ENCODE measurements at regions of chr4 and their contacts with region 1.

Region 1: DNA sequence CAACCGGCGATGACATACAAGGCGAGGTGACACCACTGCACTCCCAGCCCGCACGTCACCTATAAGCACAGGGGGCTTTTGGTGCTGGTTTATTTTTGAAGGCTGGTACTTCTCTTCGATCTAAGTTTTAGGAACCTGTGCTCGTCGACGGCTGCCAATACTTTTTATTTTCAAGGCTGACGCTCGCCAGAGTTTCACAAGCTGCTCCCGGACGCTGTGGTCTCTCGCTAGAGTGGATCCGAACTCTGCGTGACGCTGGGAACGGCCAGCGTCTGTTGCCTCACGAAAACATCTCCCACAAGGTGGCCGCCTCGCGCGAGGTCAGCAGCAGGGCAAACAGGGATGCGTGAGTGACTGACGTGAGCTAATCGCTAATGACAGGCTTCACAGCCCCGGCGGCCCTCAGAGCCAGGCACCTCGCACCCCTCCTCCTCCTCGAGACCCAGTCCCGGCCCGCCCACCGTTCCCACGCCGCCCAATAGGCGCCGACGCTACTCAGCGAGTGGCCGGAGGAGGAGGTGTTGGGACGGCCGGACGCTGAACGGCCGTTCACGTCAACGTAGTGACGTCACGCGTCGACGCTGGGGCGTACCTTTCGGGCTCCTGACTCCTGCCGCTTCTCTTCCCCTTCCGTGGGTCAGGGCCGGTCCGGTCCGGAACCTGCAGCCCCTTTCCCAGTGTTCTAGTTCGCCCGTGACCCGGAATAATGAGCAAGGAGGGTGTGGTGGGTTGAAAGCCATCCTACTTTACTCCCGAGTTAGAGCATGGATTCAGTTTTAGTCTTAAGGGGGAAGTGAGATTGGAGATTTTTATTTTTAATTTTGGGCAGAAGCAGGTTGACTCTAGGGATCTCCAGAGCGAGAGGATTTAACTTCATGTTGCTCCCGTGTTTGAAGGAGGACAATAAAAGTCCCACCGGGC is at the start of gene CLCN3:
- DNase-seq: peak; percentile 97 to 99
- ATAC-seq: peak; percentile 98 to 100 (median 99)
- H3K4me3 ChIP-seq: peak within 1 kb of the TSS; percentile 68 to 85 (median 72)
- H3K27ac ChIP-seq: peak within 1 kb of the TSS; percentile 80 to 96 (median 94)
- H3K4me1 ChIP-seq: peaks cover 0 to 45% (median 29%) of the 10 kb centered on the region in 9 donors
- H3K27me3 ChIP-seq: no peaks in the 10 kb centered on the region
- CTCF ChIP-seq: peak in 4 of 9 donors; percentile 21 to 47 (median 34)
- total RNA-seq, gene CLCN3: 53.4 to 94.9 (median 65.2) TPM

Region 2: DNA sequence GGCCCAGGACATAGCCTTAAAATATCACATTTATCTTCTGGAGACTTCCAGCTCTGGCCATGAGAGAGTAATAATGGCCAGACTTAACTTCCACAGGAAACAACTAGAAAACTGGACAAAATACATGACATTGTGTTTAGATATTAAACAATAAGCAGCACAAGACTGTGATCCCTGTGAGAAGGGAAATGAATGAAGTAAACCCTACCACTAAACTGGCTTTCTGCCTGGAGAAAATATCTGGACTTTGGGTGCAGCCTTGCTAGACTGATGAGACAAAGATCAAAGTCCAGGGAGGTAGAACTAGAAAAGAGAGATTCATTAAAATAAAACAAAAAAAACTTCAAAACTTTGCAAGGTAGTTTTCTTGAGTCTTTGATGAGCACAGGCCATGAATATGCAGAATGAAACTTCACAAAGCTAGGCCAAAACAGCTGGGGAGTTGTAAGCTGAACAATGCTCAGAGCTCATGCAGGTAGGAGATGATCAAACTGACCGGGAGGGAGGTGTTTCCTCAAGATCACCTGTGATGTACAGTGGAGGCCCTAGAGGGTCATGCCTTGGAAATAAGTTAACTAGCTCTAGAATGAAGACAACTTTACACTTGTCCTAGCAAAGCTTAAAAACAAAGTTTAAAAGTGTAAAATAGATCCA is 202.5 kb before region 1 on chr4:
- intact Hi-C with region 1: no loop called
- DNase-seq: no peak
- ATAC-seq: no peak
- H3K4me3 ChIP-seq: no peak overlapping the region
- H3K27ac ChIP-seq: no peak overlapping the region
- H3K4me1 ChIP-seq: peaks cover 0 to 11% (median 0%) of the 10 kb centered on the region in 9 donors
- H3K27me3 ChIP-seq: no peaks in the 10 kb centered on the region
- CTCF ChIP-seq: no peak

Region 3: GRCh38 chr4:169659716-169660670 is 39.8 kb after region 1 on chr4:
- intact Hi-C with region 1: loop called in 8 of 10 experiments (anchors 1 to 10 kb)
- DNase-seq: peak in 1 of 2 donors; percentile 89
- ATAC-seq: peak; percentile 96 to 100 (median 99)
- H3K4me3 ChIP-seq: peak overlapping the region; percentile 19 to 59 (median 50)
- H3K27ac ChIP-seq: peak overlapping the region; percentile 68 to 89 (median 84)
- H3K4me1 ChIP-seq: peaks cover 0 to 64% (median 33%) of the 10 kb centered on the region in 9 donors
- H3K27me3 ChIP-seq: no peaks in the 10 kb centered on the region
- CTCF ChIP-seq: no peak

Region 4: GRCh38 chr4:169716677-169717076 is 96.5 kb after region 1 on chr4:
- intact Hi-C with region 1: loop called in 3 of 10 experiments (anchors 5 to 10 kb)
- DNase-seq: no peak
- ATAC-seq: no peak
- H3K4me3 ChIP-seq: no peak overlapping the region
- H3K27ac ChIP-seq: no peak overlapping the region
- H3K4me1 ChIP-seq: no peaks in the 10 kb centered on the region
- H3K27me3 ChIP-seq: no peaks in the 10 kb centered on the region
- CTCF ChIP-seq: no peak

Region 5: DNA sequence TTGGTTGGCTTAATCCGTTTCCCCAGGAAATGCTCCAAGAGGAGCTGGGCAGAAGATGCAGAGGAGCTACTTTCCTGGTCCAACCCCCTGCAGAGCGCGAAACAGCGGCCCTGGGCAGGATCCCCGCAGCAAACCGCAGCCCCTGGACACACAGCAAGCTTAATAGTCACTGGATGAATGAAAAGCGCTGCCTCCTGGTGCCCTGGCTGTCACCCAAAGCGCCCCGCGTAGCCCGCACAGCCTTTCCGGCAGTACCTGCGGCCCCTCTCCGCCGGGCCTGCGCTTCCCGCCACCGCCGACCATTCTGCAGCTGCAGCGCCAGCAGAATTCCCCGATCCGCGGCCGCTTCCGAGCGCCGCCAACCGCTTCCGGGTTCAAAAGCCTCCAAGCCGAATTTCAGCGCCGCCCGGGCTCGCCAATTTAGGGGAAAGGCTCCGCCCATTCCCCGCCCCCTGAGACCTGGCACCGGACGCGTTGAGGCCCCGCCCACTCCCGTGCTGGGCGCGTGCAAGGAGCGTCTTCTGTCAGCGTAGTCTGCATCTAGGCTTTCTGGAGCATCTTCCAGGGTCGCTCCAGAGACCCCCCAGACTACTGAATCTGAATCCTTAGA is 137.5 kb after region 1 on chr4 and contains the start of gene HPF1:
- intact Hi-C with region 1: loop called in 1 of 10 experiments (anchors 10 kb)
- DNase-seq: peak; percentile 91 to 94
- ATAC-seq: peak; percentile 97 to 99 (median 98)
- H3K4me3 ChIP-seq: peak within 1 kb of the TSS; percentile 61 to 95 (median 82)
- H3K27ac ChIP-seq: peak within 1 kb of the TSS in 9 of 10 donors; percentile 45 to 84 (median 75)
- H3K4me1 ChIP-seq: peaks cover 0 to 28% (median 18%) of the 10 kb centered on the region in 9 donors
- H3K27me3 ChIP-seq: no peaks in the 10 kb centered on the region
- CTCF ChIP-seq: no peak
- total RNA-seq, gene HPF1: 15.4 to 18.6 (median 17.7) TPM

Region 6: GRCh38 chr4:170047771-170048354 is 427.6 kb after region 1 on chr4:
- intact Hi-C with region 1: loop called in 2 of 10 experiments (anchors 10 kb)
- DNase-seq: peak in 1 of 2 donors; percentile 52
- ATAC-seq: no peak
- H3K4me3 ChIP-seq: no peak overlapping the region
- H3K27ac ChIP-seq: no peak overlapping the region
- H3K4me1 ChIP-seq: no peaks in the 10 kb centered on the region
- H3K27me3 ChIP-seq: peaks cover 0 to 10% (median 0%) of the 10 kb centered on the region in 7 donors
- CTCF ChIP-seq: peak; percentile 59 to 86 (median 82)

Measured in heart right ventricle (tissue), 16 donors.